AG04449 (cell line): ENCODE measurements at regions of chr2 and their contacts with region 1.

Region 1: DNA sequence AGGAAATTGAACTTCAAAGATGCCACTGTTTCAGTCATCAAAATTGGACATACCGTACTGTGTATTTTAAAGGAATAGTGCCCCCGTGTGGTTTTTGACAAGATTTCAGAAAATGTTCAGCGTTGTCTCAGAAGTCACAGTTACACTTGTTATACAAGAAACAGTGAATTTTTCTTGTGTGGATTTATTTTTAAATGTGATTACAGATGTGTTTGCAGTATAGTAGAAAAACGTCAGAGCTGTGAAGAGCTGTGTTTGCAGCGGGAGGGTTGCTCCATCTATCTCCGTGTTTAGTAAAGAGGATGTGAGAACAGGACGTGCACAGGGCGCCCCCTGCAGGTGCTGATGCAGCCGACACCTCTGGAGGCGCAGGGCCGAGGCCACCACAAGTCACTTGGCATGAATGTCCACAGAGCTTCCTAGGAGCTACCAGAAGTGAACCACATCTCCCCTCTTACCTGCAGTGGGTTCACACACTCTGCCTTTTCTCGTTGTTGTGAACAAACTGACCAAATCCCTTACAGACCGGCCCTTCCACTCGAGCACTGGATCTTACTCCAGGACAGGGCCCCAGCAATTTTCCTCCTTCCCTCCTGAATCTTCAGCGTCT is 73.1 kb downstream of the CACNB4 start:
- DNase-seq: peak; percentile 9
- H3K4me3 ChIP-seq: peak overlapping the region; percentile 39
- CTCF ChIP-seq: peak; percentile 99

Region 2: GRCh38 chr2:152012697-152013096 is 13.1 kb before region 1 on chr2:
- CTCF ChIA-PET with region 1: interaction called, 106 read pairs
- POLR2A ChIA-PET with region 1: no interaction called
- DNase-seq: no peak
- H3K4me3 ChIP-seq: no peak overlapping the region
- CTCF ChIP-seq: no peak

Region 3: GRCh38 chr2:152042636-152043615 is 17.1 kb after region 1 on chr2:
- CTCF ChIA-PET with region 1: interaction called, 75 read pairs
- POLR2A ChIA-PET with region 1: no interaction called
- DNase-seq: no peak
- H3K4me3 ChIP-seq: no peak overlapping the region
- CTCF ChIP-seq: no peak

Region 4: GRCh38 chr2:152054593-152054992 is 28.8 kb after region 1 on chr2:
- CTCF ChIA-PET with region 1: interaction called, 25 read pairs
- POLR2A ChIA-PET with region 1: no interaction called
- DNase-seq: peak; percentile 74
- H3K4me3 ChIP-seq: no peak overlapping the region
- CTCF ChIP-seq: no peak